ENCODE measurements at regions of chr2 and their contacts with region 1.

Region 1: GRCh38 chr2:177618255-177619253 is 226.0 kb downstream of the AGPS start:
- DNase-seq: peak; percentile 90 to 92
- H3K4me3 ChIP-seq: peak overlapping the region; percentile 41 to 75 (median 65)
- H3K27ac ChIP-seq: peak overlapping the region; percentile 80 to 97 (median 94)
- H3K4me1 ChIP-seq: peaks cover 4 to 5% of the 10 kb centered on the region in 2 donors
- H3K27me3 ChIP-seq: no peaks in the 10 kb centered on the region
- CTCF ChIP-seq: no peak
- POLR2A ChIP-seq: peak in 1 of 2 donors; percentile 46

Region 2: GRCh38 chr2:177552422-177553175 is 66.0 kb before region 1 on chr2:
- intact Hi-C with region 1: loop called (anchors 10 kb)
- DNase-seq: peak; percentile 83 to 88
- H3K4me3 ChIP-seq: peak overlapping the region; percentile 23 to 100 (median 57)
- H3K27ac ChIP-seq: peak overlapping the region; percentile 95 to 99 (median 99)
- H3K4me1 ChIP-seq: peaks cover 9 to 20% of the 10 kb centered on the region in 2 donors
- H3K27me3 ChIP-seq: no peaks in the 10 kb centered on the region
- CTCF ChIP-seq: no peak
- POLR2A ChIP-seq: peak in 1 of 2 donors; percentile 13